Panc1 (cell line): ENCODE measurements at regions of chr13 and their contacts with region 1.

Region 1: DNA sequence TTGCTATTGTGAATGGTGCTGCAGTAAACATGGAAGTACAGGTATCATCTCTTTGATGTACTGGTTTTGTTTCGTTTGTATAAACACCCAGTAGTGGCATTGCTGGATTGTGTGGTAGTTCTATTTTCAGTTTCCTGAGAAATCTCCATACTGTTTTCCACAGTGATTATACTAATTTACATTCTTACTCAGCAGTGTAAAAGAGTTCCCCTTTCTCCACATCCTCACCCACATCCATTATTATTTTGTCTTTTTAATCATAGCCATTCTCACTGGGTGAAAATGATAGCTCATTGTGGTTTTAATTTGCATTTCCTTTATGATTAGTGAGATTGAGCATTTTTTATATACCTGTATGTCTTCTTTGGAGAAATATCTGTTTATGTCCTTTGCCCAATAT is 62.3 kb upstream of the PARP4 start:
- DNase-seq: no peak
- ATAC-seq: no peak
- H3K4me3 ChIP-seq: no peak overlapping the region
- H3K27ac ChIP-seq: no peak overlapping the region
- H3K4me1 ChIP-seq: no peaks in the 10 kb centered on the region
- H3K27me3 ChIP-seq: no peaks in the 10 kb centered on the region
- CTCF ChIP-seq: no peak

Region 2: DNA sequence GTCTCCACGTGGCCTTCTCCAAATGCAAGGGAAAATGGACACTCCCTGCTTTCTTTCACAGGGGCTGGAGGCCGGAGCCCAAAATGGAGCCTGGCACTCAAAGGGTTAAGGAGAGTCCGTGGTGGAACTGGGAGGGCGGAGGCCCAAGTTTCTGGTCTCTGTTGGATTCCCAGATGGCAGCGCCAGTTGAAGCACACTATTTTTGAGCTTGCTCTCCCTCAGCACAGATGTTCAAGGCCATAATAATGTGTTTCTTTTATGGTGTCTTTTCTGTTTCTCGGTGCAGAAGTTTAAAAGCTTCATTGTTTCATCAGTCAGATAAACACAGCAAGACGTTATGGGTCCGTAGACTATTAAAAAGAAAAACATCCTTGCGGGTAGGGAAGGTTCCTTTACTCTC is 937.0 kb before region 1 on chr13:
- CTCF ChIA-PET with region 1: no interaction called
- POLR2A ChIA-PET with region 1: no interaction called
- in situ Hi-C with region 1: no loop called
- intact Hi-C with region 1: no loop called
- DNase-seq: no peak
- ATAC-seq: no peak
- H3K4me3 ChIP-seq: no peak overlapping the region
- H3K27ac ChIP-seq: no peak overlapping the region
- H3K4me1 ChIP-seq: no peaks in the 10 kb centered on the region
- H3K27me3 ChIP-seq: no peaks in the 10 kb centered on the region
- CTCF ChIP-seq: no peak

Region 3: DNA sequence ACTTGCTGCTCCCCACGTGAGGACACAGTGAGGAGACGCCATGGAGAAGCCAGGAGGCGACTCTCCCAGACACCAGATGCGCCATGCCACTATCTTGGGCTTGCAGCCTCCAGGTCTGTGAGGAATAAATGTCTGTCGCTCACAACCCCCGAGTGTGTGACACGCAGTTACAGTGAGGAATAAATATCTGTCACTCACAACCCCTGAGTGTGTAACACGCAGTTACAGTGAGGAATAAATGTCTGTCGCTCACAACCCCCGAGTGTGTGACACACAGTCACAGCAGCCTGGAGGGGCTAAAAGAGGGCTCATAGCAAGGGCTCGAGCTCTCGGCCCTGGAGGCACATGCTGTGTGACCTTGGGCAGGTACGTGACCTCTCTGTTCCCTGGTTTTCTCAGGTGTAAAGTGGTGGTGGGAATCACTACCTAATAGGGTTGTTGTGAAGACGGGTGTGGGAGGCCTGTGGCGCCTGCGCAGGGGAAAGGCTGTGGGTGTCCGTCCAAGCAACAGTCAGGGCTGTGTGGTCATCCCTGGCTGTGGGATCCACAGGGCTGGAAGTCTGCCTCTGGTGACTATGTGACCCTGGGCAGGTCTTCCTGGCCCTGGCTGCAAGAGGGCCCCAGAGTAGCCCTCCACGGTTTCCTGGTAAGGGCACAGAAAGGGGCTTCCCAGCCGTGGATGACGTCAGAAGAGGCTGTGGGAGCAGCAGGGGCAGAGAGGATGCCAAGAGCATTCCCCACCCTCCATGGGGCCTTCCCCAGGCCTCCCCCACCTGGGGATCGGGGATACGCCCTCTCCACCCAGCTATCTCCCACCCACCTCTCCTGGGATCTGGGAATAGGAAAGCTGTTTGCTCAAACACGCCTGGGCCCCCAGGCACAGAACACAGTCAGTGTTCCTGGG is 187.8 kb before region 1 on chr13:
- CTCF ChIA-PET with region 1: no interaction called
- POLR2A ChIA-PET with region 1: no interaction called
- in situ Hi-C with region 1: no loop called
- intact Hi-C with region 1: no loop called
- DNase-seq: no peak
- ATAC-seq: no peak
- H3K4me3 ChIP-seq: no peak overlapping the region
- H3K27ac ChIP-seq: no peak overlapping the region
- H3K4me1 ChIP-seq: no peaks in the 10 kb centered on the region
- H3K27me3 ChIP-seq: no peaks in the 10 kb centered on the region
- CTCF ChIP-seq: no peak

Region 4: GRCh38 chr13:24671386-24672107 is 96.7 kb after region 1 on chr13:
- CTCF ChIA-PET with region 1: no interaction called
- POLR2A ChIA-PET with region 1: no interaction called
- in situ Hi-C with region 1: no loop called
- intact Hi-C with region 1: loop called (anchors 1 kb)
- DNase-seq: no peak
- ATAC-seq: peak; percentile 90
- H3K4me3 ChIP-seq: no peak overlapping the region
- H3K27ac ChIP-seq: no peak overlapping the region
- H3K4me1 ChIP-seq: peaks cover 6% of the 10 kb centered on the region; the same call in 1 of the 2 replicates
- H3K27me3 ChIP-seq: no peaks in the 10 kb centered on the region
- CTCF ChIP-seq: peak; percentile 78

Region 5: GRCh38 chr13:24727731-24728601 is 153.1 kb after region 1 on chr13:
- CTCF ChIA-PET with region 1: no interaction called
- POLR2A ChIA-PET with region 1: no interaction called
- in situ Hi-C with region 1: no loop called
- intact Hi-C with region 1: loop called (anchors 5 kb)
- DNase-seq: peak; percentile 47
- ATAC-seq: peak; percentile 99
- H3K4me3 ChIP-seq: peak overlapping the region in 1 of 2 experiments; percentile 8; a peak in 1 of 4 replicates
- H3K27ac ChIP-seq: no peak overlapping the region
- H3K4me1 ChIP-seq: no peaks in the 10 kb centered on the region
- H3K27me3 ChIP-seq: no peaks in the 10 kb centered on the region
- CTCF ChIP-seq: peak; percentile 87